ENCODE measurements at regions of chr15 and their contacts with region 1.

Region 1: DNA sequence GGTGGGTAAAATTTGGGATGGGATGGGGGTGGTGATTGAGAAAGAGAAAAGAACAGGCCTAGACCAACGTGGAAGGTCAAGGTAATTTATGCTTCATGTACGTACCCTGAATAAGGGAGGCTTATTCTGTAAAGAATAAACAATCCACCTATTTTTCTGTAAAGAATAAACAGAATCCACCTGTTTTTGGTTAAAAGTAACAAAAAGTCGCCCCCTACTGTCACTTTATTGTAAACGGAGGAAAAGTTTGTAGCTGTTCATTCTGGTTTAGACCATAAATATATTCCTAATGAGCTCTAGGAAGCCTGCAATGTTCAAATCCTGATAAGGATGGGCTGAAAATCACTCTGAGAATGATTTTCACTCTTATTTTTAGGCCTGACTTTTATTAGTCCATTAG is 23.5 kb upstream of the SQOR start:
- DNase-seq: peak in 1 of 2 experiments; percentile 30
- H3K4me3 ChIP-seq: no peak overlapping the region
- H3K4me3 Mint-ChIP-seq: no peak overlapping the region
- H3K27ac Mint-ChIP-seq: no peak overlapping the region
- H3K4me1 ChIP-seq: no peaks in the 10 kb centered on the region
- H3K4me1 Mint-ChIP-seq: no peaks in the 10 kb centered on the region
- H3K27me3 ChIP-seq: no peaks in the 10 kb centered on the region
- H3K27me3 Mint-ChIP-seq: no peaks in the 10 kb centered on the region
- CTCF ChIP-seq: peak; percentile 41 to 62

Region 2: GRCh38 chr15:45429974-45430792 is 181.1 kb before region 1 on chr15:
- CTCF ChIA-PET with region 1: no interaction called
- POLR2A ChIA-PET with region 1: no interaction called
- intact Hi-C with region 1: loop called (anchors 1 kb)
- DNase-seq: peak; percentile 61 to 87
- H3K4me3 ChIP-seq: peak overlapping the region; percentile 66
- H3K4me3 Mint-ChIP-seq: peak overlapping the region; percentile 61
- H3K27ac Mint-ChIP-seq: no peak overlapping the region
- H3K4me1 ChIP-seq: peaks cover 8% of the 10 kb centered on the region; the same call in 1 of the 2 replicates
- H3K4me1 Mint-ChIP-seq: no peaks in the 10 kb centered on the region
- H3K27me3 ChIP-seq: no peaks in the 10 kb centered on the region
- H3K27me3 Mint-ChIP-seq: no peaks in the 10 kb centered on the region
- CTCF ChIP-seq: peak; percentile 99 to 100

Region 3: DNA sequence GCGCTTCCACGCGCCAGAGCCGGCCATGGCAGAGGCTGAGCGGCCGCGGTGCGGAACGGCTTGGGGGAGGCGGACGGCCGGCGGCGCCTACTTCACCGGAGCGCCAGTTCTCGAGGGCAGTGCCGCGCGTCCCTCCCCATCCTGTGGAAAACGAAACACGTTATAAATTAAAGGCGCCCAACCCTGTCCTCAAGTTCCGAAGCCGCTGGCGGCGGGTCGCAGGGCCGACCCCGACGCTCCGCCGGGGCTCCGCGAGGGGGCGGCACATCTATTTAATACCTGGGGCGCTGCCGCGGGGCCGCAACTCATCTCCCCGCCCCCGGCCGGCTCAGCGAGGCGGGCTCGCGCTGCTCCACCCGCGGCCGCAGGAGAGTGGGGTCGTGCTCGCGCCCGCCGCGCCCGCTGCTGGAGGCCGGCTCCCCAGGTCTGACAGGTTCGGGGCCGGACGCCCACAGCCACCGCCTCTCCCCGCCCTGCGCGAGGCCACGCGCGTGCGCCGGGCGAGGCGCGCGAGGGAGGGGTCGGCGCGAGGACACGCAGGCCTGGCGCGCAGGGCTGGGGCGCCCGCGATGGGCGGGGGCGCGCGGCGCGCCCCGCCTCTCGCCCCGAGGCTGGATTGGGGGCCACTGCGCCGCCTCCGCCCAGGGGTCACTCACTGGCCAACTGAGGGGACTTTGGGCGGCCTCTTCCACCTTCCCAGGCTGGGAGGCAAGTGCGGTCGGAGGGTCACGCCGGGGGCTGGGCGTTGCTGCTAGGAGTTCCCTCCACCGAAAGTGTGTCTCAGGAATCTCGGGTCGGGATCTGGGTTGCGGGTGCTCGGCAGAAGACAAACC is 88.8 kb before region 1 on chr15 and contains the start of gene SLC30A4:
- CTCF ChIA-PET with region 1: interaction called, 6 read pairs
- POLR2A ChIA-PET with region 1: no interaction called
- intact Hi-C with region 1: loop called (anchors 1 kb)
- DNase-seq: peak; percentile 64 to 70
- H3K4me3 ChIP-seq: peak within 1 kb of the TSS; percentile 71
- H3K4me3 Mint-ChIP-seq: peak within 1 kb of the TSS; percentile 84
- H3K27ac Mint-ChIP-seq: no peak within 1 kb of the TSS
- H3K4me1 ChIP-seq: peaks cover 6% of the 10 kb centered on the region; the same call in 1 of the 2 replicates
- H3K4me1 Mint-ChIP-seq: peaks cover 19% of the 10 kb centered on the region
- H3K27me3 ChIP-seq: no peaks in the 10 kb centered on the region
- H3K27me3 Mint-ChIP-seq: peaks cover 4% of the 10 kb centered on the region
- CTCF ChIP-seq: peak; percentile 26 to 37
- total RNA-seq, gene SLC30A4: 0.61 and 1.2 TPM in 2 replicates

Region 4: DNA sequence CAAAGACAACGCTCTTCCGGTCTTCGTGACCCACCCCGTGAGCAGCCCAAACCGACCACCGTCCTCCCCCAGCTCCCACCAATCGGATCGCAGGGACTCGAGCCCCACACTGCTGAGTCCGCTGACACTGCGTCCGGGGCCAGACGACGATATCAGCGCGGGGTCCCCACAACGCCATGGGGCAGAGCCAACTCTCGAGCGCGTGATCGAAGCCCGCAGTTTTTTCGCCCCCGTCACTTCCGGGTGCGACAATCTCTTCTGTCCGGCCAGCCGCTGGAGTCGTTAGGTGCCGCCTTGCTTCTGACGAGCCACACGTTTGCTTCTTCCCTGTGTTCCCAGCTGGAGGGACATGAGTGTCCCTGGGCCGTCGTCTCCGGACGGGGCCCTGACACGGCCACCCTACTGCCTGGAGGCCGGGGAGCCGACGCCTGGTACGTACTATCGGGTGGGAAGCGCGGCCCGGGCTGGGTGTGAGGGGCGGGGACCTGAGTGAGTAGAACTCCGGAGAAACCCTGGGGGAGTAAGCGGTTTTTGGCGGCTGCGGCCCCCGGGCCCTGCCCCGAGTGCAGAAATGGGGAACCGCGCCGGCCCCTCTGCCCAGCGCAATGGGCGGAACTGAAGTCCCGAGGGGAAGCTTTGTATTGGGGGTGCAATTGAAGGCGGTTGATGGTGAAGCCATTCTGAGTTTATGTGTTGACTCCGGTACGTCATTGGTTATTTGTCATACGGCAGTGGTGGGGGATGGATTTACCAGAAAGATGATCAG is 24.0 kb before region 1 on chr15 and contains the start of gene BLOC1S6:
- CTCF ChIA-PET with region 1: interaction called, 8 read pairs
- POLR2A ChIA-PET with region 1: interaction called, 4 read pairs
- intact Hi-C with region 1: loop called (anchors 2 kb)
- DNase-seq: peak; percentile 90
- H3K4me3 ChIP-seq: peak within 1 kb of the TSS; percentile 72
- H3K4me3 Mint-ChIP-seq: peak within 1 kb of the TSS; percentile 81
- H3K27ac Mint-ChIP-seq: peak within 1 kb of the TSS; percentile 100
- H3K4me1 ChIP-seq: peaks cover 18% of the 10 kb centered on the region
- H3K4me1 Mint-ChIP-seq: peaks cover 8% of the 10 kb centered on the region
- H3K27me3 ChIP-seq: no peaks in the 10 kb centered on the region
- H3K27me3 Mint-ChIP-seq: no peaks in the 10 kb centered on the region
- CTCF ChIP-seq: no peak
- total RNA-seq, gene BLOC1S6: 37.0 and 40.3 TPM in 2 replicates